ENCODE measurements at regions of chrX and their contacts with region 1.

Region 1: DNA sequence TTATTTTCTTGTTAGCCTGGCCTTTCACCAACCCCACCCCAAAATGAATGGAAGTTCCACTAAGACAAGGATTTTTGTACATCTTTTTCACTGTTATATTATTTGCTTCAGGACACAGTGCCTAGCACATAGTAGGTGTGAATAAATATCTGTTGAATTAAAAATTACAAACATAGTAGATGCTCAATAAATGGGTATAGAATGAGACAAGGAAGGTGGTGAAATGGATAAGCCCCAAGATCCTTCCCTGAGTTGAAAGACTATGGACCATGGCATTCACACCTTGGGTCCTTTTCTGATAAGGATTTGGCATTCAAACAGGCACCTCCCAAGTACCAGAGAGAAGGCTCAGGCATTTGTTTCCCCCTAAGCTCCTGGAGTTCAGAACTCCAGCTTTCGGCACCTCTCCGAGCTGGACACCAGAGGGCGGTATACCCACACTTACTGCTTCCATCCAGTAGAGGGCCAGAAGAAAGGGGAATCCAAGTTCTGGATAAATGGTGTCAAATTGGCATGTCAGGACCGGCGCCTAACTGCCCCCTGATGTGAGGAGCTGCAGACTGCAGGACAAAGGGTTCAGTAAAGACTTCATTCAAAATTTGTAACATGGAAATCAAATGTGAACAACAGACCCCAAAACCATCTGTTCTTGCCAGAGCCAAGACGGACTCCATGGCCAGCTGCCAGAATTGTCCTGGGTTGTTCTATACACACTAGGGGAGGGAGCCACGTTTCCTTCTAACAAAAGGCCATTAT is 193.0 kb downstream of the GPC3 start:
- DNase-seq: peak; percentile 60 to 61
- H3K4me3 ChIP-seq: no peak overlapping the region
- H3K27ac ChIP-seq: no peak overlapping the region
- H3K4me1 ChIP-seq: no peaks in the 10 kb centered on the region
- H3K27me3 ChIP-seq: no peaks in the 10 kb centered on the region
- CTCF ChIP-seq: peak; percentile 96

Region 2: GRCh38 chrX:133709486-133709885 is 82.9 kb before region 1 on chrX:
- CTCF ChIA-PET with region 1: no interaction called
- POLR2A ChIA-PET with region 1: no interaction called
- intact Hi-C with region 1: no loop called
- DNase-seq: no peak
- H3K4me3 ChIP-seq: no peak overlapping the region
- H3K27ac ChIP-seq: no peak overlapping the region
- H3K4me1 ChIP-seq: no peaks in the 10 kb centered on the region; the same call in 1 of the 2 replicates
- H3K27me3 ChIP-seq: no peaks in the 10 kb centered on the region
- CTCF ChIP-seq: no peak

Region 3: GRCh38 chrX:133921764-133922389 is 129.5 kb after region 1 on chrX:
- CTCF ChIA-PET with region 1: no interaction called
- POLR2A ChIA-PET with region 1: no interaction called
- intact Hi-C with region 1: loop called (anchors 2 kb)
- DNase-seq: peak in 1 of 2 experiments; percentile 29
- H3K4me3 ChIP-seq: no peak overlapping the region
- H3K27ac ChIP-seq: no peak overlapping the region
- H3K4me1 ChIP-seq: no peaks in the 10 kb centered on the region
- H3K27me3 ChIP-seq: no peaks in the 10 kb centered on the region
- CTCF ChIP-seq: peak; percentile 72

Region 4: DNA sequence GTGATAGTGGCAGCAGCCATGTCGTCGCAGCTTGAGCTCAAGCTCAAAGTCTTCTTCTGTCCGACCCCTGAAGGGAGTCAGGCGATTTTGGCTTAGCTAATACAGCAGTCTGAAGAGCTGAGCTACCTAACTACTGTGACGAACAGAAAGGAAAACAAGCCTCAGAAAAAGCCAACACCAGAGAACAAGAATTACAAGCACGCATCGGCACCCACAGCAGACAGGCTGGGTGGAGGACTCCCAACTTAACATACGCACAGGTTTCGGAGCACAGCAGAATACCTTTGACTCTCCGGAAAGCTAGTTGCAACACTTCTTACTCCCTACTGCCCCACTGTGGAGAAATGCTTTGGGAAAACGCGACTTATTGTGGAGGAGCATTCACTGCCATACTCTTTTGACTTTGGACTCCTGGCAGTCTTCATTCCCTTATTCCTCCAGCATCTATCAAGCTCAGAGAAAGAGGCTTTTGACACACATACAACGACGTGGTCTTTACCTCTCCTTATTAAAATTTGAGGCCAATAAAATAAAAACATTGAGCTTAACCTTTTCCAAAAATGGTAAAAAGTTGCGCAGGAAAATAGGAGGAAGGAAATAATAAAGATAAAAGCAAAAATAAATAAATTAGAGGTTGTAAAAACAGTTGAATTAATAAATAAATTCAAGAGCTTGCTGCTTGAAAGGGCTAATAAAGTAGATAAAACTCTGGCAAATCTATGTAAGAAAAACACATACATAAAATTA is 234.4 kb after region 1 on chrX:
- CTCF ChIA-PET with region 1: no interaction called
- POLR2A ChIA-PET with region 1: no interaction called
- intact Hi-C with region 1: loop called (anchors 5 kb)
- DNase-seq: peak in 1 of 2 experiments; percentile 6
- H3K4me3 ChIP-seq: no peak overlapping the region
- H3K27ac ChIP-seq: no peak overlapping the region
- H3K4me1 ChIP-seq: no peaks in the 10 kb centered on the region
- H3K27me3 ChIP-seq: no peaks in the 10 kb centered on the region
- CTCF ChIP-seq: peak; percentile 45; the same call in 1 of the 2 replicates

Measured in PC-9 (cell line).